ENCODE measurements at regions of chr17 and their contacts with region 1.

Region 1: GRCh38 chr17:30093463-30094147 is 23.0 kb upstream of the NSRP1 start:
- DNase-seq: peak; percentile 72
- ATAC-seq: peak; percentile 92
- H3K4me3 Mint-ChIP-seq: no peak overlapping the region
- H3K27ac Mint-ChIP-seq: no peak overlapping the region
- H3K4me1 Mint-ChIP-seq: 0 out of 2 replicates have a peak, but pooled peaks cover 3% of the 10 kb centered on the region
- H3K27me3 Mint-ChIP-seq: no peaks in the 10 kb centered on the region; the same call in 1 of the 2 replicates
- CTCF ChIP-seq: peak; percentile 94

Region 2: DNA sequence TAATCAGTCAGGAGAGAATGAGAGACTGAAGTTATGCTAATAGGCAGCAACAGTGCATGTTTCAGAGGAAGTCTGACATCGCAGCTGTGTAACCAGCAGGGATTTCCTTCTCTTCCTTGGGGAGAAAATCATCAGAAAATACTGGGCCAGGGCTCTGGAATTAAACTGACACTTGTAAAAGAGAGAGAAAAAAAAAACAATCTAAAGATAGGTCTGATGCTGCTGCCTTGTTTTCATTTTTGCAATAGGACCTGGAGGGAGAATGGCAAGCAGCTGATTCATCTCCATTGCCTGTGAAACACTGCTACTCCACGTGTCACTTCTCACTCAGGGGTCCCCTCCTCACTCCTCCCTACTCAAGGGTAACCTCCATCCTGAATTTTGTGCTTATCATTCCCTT is 453.2 kb before region 1 on chr17:
- CTCF ChIA-PET with region 1: interaction called, 69 read pairs
- POLR2A ChIA-PET with region 1: no interaction called
- DNase-seq: no peak
- ATAC-seq: no peak
- H3K4me3 Mint-ChIP-seq: no peak overlapping the region
- H3K27ac Mint-ChIP-seq: peak overlapping the region; percentile 38
- H3K4me1 Mint-ChIP-seq: peaks cover 28% of the 10 kb centered on the region
- H3K27me3 Mint-ChIP-seq: no peaks in the 10 kb centered on the region
- CTCF ChIP-seq: no peak

Region 3: GRCh38 chr17:29867643-29868181 is 225.9 kb before region 1 on chr17:
- CTCF ChIA-PET with region 1: interaction called, 16 read pairs
- POLR2A ChIA-PET with region 1: no interaction called
- DNase-seq: no peak
- ATAC-seq: no peak
- H3K4me3 Mint-ChIP-seq: no peak overlapping the region
- H3K27ac Mint-ChIP-seq: peak overlapping the region; percentile 13
- H3K4me1 Mint-ChIP-seq: peaks cover 35% of the 10 kb centered on the region
- H3K27me3 Mint-ChIP-seq: no peaks in the 10 kb centered on the region
- CTCF ChIP-seq: no peak

Region 4: DNA sequence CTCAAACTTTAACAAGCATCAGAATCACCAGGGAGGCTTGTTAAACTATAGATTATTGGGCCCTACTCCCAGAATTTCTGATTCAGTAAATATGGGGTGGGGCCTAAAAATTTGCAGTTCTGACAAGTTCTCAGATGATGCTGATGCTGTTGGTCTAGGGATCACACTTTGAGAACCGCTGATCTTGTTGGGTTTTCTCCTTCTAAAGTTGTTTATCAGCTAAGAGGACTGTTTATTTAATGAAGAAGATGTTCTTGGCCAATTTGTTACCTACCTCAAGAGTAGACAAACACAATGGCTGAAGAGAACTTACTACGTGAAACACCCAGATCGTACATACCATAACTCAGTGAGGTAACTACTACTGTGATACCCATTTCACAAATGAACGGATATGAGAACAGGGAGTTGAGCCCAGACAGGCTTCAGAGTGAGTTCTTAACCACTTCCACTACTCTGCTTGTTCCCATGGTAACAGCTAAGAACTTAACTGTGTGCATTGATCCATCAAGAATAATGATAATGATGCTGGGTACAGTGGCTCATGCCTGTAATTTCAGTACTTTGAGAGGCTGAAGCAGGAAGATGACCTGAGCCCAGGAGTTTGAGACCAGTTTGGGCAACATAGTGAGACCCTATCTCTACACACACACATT is 62.3 kb before region 1 on chr17:
- CTCF ChIA-PET with region 1: interaction called, 45 read pairs
- POLR2A ChIA-PET with region 1: interaction called, 3 read pairs
- DNase-seq: no peak
- ATAC-seq: no peak
- H3K4me3 Mint-ChIP-seq: no peak overlapping the region
- H3K27ac Mint-ChIP-seq: no peak overlapping the region
- H3K4me1 Mint-ChIP-seq: no peaks in the 10 kb centered on the region
- H3K27me3 Mint-ChIP-seq: no peaks in the 10 kb centered on the region; the same call in 1 of the 2 replicates
- CTCF ChIP-seq: no peak

Region 5: DNA sequence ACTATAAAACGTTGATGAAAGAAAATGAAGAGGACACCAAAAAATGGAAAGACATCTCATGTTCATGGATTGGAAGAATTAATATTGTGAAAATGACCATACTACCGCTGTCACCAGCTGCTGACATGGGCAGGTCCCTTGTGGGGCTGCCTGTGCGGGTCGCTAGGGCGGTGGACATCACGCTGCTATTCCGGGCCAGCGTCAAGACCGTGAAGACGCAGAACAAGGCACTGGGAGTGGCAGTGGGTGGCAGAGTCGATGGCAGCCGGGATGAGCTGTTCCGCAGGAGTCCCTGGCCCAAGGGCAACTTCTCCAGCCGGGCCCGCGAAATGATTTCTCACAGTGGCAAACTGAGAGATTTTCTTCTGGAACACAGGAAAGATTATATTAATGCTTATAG is 25.1 kb before region 1 on chr17:
- CTCF ChIA-PET with region 1: interaction called, 35 read pairs
- POLR2A ChIA-PET with region 1: no interaction called
- DNase-seq: no peak
- ATAC-seq: no peak
- H3K4me3 Mint-ChIP-seq: no peak overlapping the region
- H3K27ac Mint-ChIP-seq: no peak overlapping the region
- H3K4me1 Mint-ChIP-seq: no peaks in the 10 kb centered on the region
- H3K27me3 Mint-ChIP-seq: peaks cover 11% of the 10 kb centered on the region
- CTCF ChIP-seq: no peak

Region 6: DNA sequence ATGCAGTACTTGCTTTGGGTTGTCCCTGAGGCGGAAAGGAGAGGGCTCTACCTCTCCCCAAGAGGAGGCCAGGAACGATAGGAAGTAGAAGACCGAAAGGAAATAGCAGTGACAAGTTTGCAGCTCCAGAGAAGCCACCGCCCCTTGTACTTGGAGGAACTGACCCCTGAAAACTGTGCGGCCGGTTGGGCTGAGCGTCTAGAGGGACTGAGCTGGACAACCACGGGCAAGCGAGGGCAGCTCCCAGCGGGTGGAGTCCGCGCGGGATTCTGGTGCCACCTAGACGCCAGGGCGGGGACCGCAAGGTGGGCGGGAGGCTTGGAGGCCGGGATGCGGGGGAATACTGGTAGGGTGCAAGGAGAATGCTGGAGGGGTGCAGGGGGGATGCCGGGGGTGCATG is 143.2 kb after region 1 on chr17:
- CTCF ChIA-PET with region 1: interaction called, 11 read pairs
- POLR2A ChIA-PET with region 1: no interaction called
- DNase-seq: peak; percentile 75
- ATAC-seq: peak; percentile 11
- H3K4me3 Mint-ChIP-seq: peak overlapping the region; percentile 54
- H3K27ac Mint-ChIP-seq: no peak overlapping the region
- H3K4me1 Mint-ChIP-seq: peaks cover 28% of the 10 kb centered on the region
- H3K27me3 Mint-ChIP-seq: peaks cover 82% of the 10 kb centered on the region
- CTCF ChIP-seq: no peak

Region 7: DNA sequence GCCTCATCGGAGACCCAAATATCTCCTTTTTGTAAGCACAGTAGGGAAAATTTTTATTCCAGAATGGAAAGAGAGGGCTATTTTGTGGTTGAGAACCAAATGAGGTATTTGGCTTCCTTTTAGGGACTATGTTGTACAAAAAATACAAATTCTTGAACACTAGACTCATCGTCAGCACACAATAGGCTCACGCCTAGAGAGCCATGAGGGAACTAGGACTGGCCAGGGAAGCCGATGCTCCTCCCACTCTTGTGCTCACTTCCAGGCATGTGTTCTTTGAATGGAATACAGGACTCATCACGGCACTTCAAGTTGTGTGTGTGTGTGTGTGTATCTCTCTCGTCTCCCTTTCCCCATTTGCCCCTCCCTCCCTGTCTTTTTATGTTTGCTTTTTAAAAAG is 216.0 kb after region 1 on chr17:
- CTCF ChIA-PET with region 1: no interaction called
- POLR2A ChIA-PET with region 1: no interaction called
- DNase-seq: no peak
- ATAC-seq: no peak
- H3K4me3 Mint-ChIP-seq: no peak overlapping the region
- H3K27ac Mint-ChIP-seq: no peak overlapping the region
- H3K4me1 Mint-ChIP-seq: no peaks in the 10 kb centered on the region
- H3K27me3 Mint-ChIP-seq: no peaks in the 10 kb centered on the region
- CTCF ChIP-seq: no peak